ENCODE measurements at regions of chr5 and their contacts with region 1.

Region 1: DNA sequence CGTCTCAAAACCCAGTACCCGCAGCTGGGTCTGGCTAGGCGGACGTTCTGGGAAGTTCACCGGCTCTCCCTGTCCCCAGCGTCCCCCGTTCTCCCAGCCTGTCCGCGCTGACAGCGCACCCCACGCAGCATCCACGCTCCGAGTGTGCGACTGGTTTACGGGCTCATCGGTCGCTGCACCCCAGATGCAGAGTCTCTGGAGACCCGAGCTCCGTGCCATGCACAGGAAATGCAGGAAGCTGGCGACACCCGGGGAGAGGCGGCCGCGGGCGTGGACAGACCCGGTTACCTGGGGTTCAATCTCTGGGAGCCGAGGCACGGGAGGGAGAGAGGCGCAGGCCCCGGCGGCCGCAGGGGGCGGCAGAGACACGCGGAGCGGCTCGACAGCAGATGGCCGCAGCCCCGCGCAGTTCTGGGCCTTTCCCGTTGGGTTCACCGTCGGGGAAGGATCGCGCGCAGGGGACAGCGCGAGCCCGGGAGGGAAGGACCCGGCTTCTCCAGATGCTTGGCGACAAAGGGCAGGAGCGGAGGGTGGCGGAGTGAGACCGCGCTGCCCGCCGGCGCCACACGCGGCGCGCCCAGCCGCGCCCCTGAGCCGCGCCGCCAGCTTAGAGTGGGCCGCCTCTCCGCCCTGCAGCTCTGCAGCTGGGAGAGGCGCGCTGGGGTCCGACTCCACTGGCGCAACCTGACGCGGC is 558 bp downstream of the SHROOM1 start:
- DNase-seq: peak; percentile 29 to 50
- ATAC-seq: peak; percentile 91 to 92
- H3K4me3 ChIP-seq: peak overlapping the region; percentile 53 to 72 (median 56)
- H3K27ac ChIP-seq: peak overlapping the region; percentile 12 to 78 (median 74)
- H3K4me1 ChIP-seq: no peaks in the 10 kb centered on the region
- H3K27me3 ChIP-seq: peaks cover 0 to 3% (median 0%) of the 10 kb centered on the region in 3 donors
- CTCF ChIP-seq: peak; percentile 72 to 95 (median 85)
- POLR2A ChIP-seq: no peak

Region 2: DNA sequence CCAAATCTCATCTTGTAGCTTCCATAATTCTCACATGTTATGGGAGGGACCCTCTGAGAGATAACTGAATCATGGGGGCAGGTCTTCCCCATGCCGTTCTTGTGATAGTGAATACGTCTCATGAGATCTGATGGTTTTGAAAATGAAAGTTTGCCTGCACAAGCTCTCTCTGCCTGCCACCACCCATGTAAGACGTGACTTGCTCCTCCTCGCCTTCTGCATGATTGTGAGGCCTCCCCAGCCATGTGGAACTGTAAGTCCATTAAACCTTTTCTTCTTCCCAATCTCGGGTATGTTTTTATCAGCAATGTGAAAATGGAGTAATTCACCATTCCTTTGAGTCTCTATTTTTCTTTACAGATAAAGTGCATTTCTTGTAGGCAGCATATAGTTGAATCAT is 966.2 kb before region 1 on chr5:
- in situ Hi-C with region 1: no loop called
- intact Hi-C with region 1: no loop called
- DNase-seq: no peak
- ATAC-seq: no peak
- H3K4me3 ChIP-seq: no peak overlapping the region
- H3K27ac ChIP-seq: no peak overlapping the region
- H3K4me1 ChIP-seq: no peaks in the 10 kb centered on the region
- H3K27me3 ChIP-seq: no peaks in the 10 kb centered on the region
- CTCF ChIP-seq: no peak
- POLR2A ChIP-seq: no peak

Region 3: GRCh38 chr5:132866342-132867045 is 36.6 kb after region 1 on chr5 and contains the starts of genes GDF9 and UQCRQ:
- in situ Hi-C with region 1: no loop called
- intact Hi-C with region 1: loop called (anchors 1 kb)
- DNase-seq: peak; percentile 95 to 96
- ATAC-seq: peak; percentile 99
- H3K4me3 ChIP-seq: peak within 1 kb of the TSS; percentile 63 to 92 (median 85)
- H3K27ac ChIP-seq: peak within 1 kb of the TSS; percentile 83 to 93 (median 88)
- H3K4me1 ChIP-seq: peaks cover 27 to 31% of the 10 kb centered on the region in 2 donors
- H3K27me3 ChIP-seq: no peaks in the 10 kb centered on the region
- CTCF ChIP-seq: no peak
- POLR2A ChIP-seq: peak; percentile 91 to 93
- total RNA-seq, gene GDF9: 0.13 to 2.5 (median 0.46) TPM in 3 of 4 donors, not detected in the other
- total RNA-seq, gene UQCRQ: 273 to 566 (median 326) TPM

Region 4: DNA sequence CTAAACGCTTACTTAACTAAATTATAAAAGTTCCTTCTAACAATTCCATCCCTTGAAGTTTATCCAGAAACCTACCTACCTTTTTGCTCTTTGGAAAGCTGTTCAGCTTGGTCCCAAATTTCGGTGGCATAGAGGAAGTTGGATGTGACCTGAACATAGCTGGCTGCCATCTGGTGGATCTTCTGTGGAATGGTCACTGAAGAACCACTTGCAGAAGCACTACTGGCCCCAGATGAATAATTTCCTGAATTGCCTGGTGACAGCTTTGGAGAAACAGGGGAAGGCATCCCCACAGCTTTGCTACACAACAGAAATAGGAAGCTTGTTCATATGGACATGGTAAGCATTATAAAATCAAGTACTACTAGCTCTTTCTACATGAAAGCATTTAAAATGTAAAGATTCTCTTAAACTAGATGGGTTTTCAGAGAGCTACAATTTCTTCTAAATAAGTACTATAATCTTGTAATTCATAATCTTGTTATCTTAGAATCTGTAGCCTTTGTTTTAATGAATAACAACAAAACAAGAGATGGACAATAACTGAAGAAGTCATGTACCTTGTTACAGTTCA is 53.5 kb after region 1 on chr5:
- in situ Hi-C with region 1: no loop called
- intact Hi-C with region 1: loop called (anchors 2 kb)
- DNase-seq: peak in 1 of 2 donors; percentile 44
- ATAC-seq: peak; percentile 39 to 90
- H3K4me3 ChIP-seq: no peak overlapping the region
- H3K27ac ChIP-seq: no peak overlapping the region
- H3K4me1 ChIP-seq: peaks cover 5 to 6% of the 10 kb centered on the region in 2 donors
- H3K27me3 ChIP-seq: no peaks in the 10 kb centered on the region
- CTCF ChIP-seq: peak; percentile 33 to 66 (median 46)
- POLR2A ChIP-seq: no peak